ENCODE measurements at regions of chr11 and their contacts with region 1.

Region 1: DNA sequence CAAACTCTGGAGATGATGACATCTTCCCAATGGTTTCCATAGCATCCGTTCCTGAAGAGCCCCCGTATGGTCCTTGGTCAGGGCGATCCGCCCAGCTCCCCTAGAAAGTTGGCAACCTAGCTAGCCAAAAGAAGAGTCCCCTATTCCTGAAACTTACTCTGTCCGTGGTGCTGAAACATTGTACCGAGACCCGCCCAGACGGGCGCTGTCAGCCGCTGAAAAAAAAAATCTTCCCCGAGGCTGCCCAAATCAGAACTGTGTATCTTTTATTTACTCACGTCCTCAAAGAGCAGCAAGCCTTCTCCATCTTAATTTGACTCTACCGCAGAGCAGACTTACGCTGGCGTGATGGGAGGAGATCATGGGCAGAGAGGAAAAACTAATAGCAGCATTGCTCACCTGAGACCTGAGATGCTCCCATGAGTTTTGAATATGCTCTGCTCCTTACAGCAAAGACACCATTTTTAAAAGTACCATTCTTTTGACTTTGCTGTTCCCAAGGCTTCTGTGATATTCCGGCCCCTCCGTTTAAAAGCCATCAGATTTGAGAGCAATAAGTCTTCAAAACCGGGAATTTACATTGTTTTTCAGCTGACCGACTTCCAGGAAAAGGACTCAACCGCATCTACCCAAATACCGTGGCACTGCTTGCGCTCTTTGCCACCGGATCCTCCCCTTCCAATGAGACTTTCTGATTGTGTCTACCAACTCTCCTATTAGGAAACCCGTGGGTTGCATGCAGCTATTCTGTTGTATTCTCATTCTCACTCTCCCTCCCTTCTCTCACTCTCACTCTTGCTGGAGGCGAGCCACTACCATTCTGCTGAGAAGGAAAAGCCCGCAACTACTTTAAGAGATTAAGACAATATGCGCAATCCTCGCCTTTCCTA is at the start of gene SLC17A6:
- ATAC-seq: peak in 7 of 8 experiments; percentile 15 to 80 (median 27)
- H3K4me3 ChIP-seq: peak within 1 kb of the TSS in 1 of 5 donors; percentile 7
- H3K27ac ChIP-seq: no peak within 1 kb of the TSS
- H3K4me1 ChIP-seq: peaks cover 0 to 5% of the 10 kb centered on the region in 2 donors
- total RNA-seq, gene SLC17A6: 0.21 to 2.0 (median 1.3) TPM in 5 of 8 experiments, not detected in the others

Region 2: DNA sequence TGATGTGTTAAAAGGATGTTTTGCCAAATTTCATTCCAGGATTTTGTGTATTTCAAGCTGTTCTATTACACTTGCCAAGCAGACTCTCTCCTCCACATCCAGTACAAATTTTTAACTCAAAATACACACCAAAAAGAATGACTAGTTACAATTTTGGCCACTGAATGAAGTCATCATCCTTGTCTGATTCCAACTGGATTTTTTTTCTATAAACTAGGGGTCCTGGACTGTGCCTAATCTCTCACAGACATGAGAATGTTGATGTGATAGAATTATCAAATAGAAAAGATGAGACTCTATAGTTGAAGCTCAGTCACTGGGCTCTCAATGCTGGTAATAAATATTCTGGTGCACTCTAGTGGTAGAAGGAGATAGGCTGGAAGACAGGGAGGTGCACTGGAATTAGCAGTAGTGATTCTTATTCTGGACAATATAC is 202.0 kb after region 1 on chr11:
- in situ Hi-C with region 1: loop called in 3 of 9 experiments (anchors 25 kb)
- ATAC-seq: peak; percentile 61 to 94 (median 83)
- H3K4me3 ChIP-seq: no peak overlapping the region
- H3K27ac ChIP-seq: no peak overlapping the region
- H3K4me1 ChIP-seq: peaks cover 0 to 11% of the 10 kb centered on the region in 2 donors

Region 3: DNA sequence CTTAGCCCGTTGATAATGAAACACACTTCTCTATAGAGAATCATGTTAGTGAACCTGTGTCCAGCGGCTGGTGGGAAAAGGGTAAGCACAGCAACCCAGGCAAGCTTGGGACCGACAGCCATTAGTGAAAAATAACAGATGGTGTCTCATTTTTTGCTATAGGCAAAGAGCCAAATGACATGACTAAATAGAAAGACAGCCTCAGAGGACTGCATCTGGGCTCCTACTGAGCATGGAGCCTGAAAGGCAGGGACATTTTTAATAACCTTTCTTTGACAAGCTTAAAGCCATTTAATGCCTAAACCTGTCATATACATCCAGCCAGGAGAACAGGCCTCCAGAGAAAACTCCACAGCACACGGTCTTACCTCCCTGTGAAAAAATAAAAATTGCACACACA is 220.8 kb after region 1 on chr11:
- in situ Hi-C with region 1: no loop called
- ATAC-seq: peak in 7 of 8 experiments; percentile 17 to 96 (median 64)
- H3K4me3 ChIP-seq: no peak overlapping the region
- H3K27ac ChIP-seq: peak overlapping the region in 1 of 2 donors; percentile 7
- H3K4me1 ChIP-seq: peaks cover 8 to 31% of the 10 kb centered on the region in 2 donors

Region 4: GRCh38 chr11:22787551-22788162 is 449.8 kb after region 1 on chr11:
- in situ Hi-C with region 1: loop called in 8 of 9 experiments (anchors 25 kb)
- ATAC-seq: peak; percentile 36 to 63 (median 54)
- H3K4me3 ChIP-seq: no peak overlapping the region
- H3K27ac ChIP-seq: no peak overlapping the region
- H3K4me1 ChIP-seq: peaks cover 10 to 21% of the 10 kb centered on the region in 2 donors